Activated CD4-positive, alpha-beta memory T cell treated with anti-CD3 and anti-CD28 coated beads for 36 hours (primary cell): ENCODE measurements at regions of chr12 and their contacts with region 1.

Region 1: GRCh38 chr12:57046947-57047890 is 2.7 kb downstream of the MYO1A start:
- DNase-seq: peak; percentile 83
- H3K4me3 Mint-ChIP-seq: peak overlapping the region; percentile 28
- H3K27ac Mint-ChIP-seq: peak overlapping the region; percentile 65
- H3K4me1 Mint-ChIP-seq: peaks cover 21% of the 10 kb centered on the region
- H3K27me3 Mint-ChIP-seq: no peaks in the 10 kb centered on the region

Region 2: GRCh38 chr12:57031138-57031725 is 16.0 kb before region 1 on chr12:
- CTCF ChIA-PET with region 1: interaction called, 3 read pairs
- POLR2A ChIA-PET with region 1: interaction called, 3 read pairs
- intact Hi-C with region 1: loop called (anchors 2 kb)
- DNase-seq: peak; percentile 35
- H3K4me3 Mint-ChIP-seq: no peak overlapping the region
- H3K27ac Mint-ChIP-seq: no peak overlapping the region
- H3K4me1 Mint-ChIP-seq: peaks cover 35% of the 10 kb centered on the region
- H3K27me3 Mint-ChIP-seq: no peaks in the 10 kb centered on the region

Region 3: GRCh38 chr12:57058454-57058853 is 11.2 kb after region 1 on chr12:
- CTCF ChIA-PET with region 1: interaction called, 42 read pairs
- POLR2A ChIA-PET with region 1: no interaction called
- intact Hi-C with region 1: no loop called
- DNase-seq: no peak
- H3K4me3 Mint-ChIP-seq: no peak overlapping the region
- H3K27ac Mint-ChIP-seq: no peak overlapping the region
- H3K4me1 Mint-ChIP-seq: peaks cover 18% of the 10 kb centered on the region
- H3K27me3 Mint-ChIP-seq: no peaks in the 10 kb centered on the region

Region 4: DNA sequence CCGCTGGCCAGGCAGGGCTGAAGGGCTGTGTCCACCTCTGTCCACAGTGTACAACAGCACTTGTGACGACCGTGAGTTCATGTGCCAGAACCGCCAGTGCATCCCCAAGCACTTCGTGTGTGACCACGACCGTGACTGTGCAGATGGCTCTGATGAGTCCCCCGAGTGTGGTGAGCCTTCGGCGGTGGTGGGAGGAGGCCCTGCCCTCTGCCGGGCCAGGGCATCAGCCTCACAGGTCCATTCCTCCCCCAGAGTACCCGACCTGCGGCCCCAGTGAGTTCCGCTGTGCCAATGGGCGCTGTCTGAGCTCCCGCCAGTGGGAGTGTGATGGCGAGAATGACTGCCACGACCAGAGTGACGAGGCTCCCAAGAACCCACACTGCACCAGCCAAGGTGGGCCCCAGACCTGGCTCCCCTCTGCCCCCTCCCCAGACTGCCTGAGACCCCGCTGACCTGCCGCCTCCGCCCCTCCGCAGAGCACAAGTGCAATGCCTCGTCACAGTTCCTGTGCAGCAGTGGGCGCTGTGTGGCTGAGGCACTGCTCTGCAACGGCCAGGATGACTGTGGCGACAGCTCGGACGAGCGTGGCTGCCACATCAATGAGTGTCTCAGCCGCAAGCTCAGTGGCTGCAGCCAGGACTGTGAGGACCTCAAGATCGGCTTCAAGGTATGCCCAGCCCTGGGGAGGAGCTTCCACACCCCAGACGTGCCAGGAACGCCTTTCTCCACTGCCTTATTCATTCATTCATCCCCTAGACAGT is 148.6 kb after region 1 on chr12:
- CTCF ChIA-PET with region 1: no interaction called
- POLR2A ChIA-PET with region 1: no interaction called
- intact Hi-C with region 1: no loop called
- DNase-seq: no peak
- H3K4me3 Mint-ChIP-seq: no peak overlapping the region
- H3K27ac Mint-ChIP-seq: no peak overlapping the region
- H3K4me1 Mint-ChIP-seq: no peaks in the 10 kb centered on the region
- H3K27me3 Mint-ChIP-seq: no peaks in the 10 kb centered on the region